Right ventricle myocardium superior (tissue), 1 donor: ENCODE measurements at regions of chrX and their contacts with region 1.

Region 1: GRCh38 chrX:68462653-68463052 is 29.4 kb upstream of the OPHN1 start:
- DNase-seq: no peak
- ATAC-seq: peak; percentile 59

Region 2: DNA sequence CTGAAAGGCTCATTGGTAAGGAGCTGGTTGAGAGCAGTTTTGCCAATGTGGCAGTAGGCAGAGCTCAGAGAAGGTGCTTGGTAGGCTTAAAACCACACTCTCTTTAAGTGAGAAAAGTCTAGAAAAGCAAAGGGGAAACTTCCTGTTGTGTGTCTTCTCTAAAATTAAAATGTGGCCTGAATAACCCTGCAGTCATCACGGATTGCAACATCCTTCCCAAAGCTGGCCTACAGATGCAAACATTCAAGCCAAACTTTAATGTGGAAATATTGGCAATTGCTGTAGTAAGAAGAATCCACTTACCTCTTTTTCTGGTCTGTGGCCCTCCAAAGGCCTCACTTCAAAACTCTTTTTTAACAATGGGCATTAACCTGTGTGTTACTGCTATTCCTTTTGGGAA is 377.9 kb before region 1 on chrX:
- intact Hi-C with region 1: no loop called
- DNase-seq: no peak
- ATAC-seq: peak; percentile 74

Region 3: DNA sequence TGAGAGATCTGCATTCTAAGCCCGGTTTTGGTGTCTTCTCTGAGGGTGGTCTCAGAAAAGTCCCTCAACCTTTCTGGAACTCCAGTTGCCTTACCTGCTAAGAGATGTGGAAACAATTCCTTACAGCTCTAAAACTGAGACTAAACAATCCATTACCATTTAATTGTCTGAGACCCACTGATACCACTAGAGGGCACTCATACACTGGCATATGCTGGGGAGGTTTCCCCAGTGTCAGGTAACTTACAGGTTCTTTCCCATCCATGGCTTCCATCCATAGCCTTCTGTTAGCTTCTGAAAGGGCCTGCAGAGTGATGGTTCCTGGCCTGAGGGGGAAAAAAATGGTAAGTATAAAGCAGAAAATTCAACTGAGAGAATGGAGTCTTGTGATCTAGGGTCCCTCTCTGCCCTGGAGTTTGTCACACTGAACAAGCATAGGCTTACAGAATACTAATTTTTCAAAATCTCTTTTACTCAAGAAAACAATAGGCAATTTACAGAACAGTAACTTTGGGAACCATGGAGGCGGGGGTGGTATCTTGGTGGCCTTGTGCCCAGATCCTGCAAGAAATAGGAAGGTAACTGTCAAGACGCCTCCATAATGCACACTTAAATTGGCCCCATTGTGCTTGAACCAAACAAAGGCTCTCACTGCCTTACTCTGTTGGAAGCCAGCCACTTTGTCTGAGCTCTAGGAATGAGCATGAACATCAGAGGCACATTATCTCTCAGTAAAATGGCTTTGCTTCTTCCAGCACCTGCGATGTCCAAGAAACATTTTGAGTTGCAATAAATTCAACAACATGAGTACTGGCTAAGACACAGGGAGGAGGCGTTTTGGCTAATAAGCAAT is 265.5 kb before region 1 on chrX:
- intact Hi-C with region 1: loop called (anchors 5 kb)
- DNase-seq: no peak
- ATAC-seq: peak; percentile 43